Activated naive CD4-positive, alpha-beta T cell treated with anti-CD3 and anti-CD28 coated beads for 36 hours (primary cell): ENCODE measurements at regions of chr16 and their contacts with region 1.

Region 1: DNA sequence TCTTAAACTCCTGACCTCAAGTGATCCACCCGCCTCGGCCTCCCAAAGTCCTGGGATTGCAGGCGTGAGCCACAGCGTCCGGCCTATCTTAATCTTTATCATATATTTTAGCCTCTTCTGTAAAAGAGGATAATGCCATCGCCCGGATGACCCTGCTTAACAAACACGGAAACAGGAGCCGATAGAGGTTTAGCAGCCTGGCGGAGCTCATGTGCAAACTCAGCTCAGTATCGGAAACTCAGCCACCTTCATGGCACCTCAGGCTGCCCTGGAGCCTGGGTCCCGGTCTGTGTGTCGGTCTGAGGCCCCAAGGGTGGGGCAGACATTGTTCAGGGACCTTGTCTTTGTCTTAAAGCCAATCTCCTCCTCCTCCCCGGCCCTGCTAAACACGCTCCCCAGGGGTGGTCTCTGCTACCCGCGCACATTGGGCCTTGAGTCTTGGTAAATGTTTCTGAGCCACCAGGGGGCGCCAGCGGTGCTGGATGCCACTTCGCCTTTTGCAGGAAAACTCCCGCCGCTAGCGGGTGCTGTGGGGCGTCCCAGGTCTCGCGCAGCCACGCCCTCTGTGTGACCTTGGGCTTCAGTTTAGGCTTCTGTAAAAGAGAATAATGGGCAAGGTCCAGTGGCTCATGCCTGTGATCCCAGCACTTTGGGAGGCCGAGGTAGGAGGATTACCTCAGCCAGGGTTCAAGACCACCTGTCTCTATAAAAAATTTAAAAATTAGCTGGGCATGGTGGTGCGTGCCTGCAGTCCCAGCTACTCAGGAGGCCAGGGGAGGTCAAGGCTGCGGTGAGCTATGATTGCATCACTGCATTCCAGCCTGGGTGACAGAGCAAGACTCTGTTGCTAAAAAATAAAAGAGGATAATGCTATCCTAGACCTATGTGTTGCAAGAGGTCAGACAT is 2.7 kb downstream of the CETP start:
- DNase-seq: peak; percentile 98
- H3K4me3 Mint-ChIP-seq: no peak overlapping the region
- H3K27ac Mint-ChIP-seq: no peak overlapping the region
- H3K4me1 Mint-ChIP-seq: peaks cover 19% of the 10 kb centered on the region
- H3K27me3 Mint-ChIP-seq: no peaks in the 10 kb centered on the region

Region 2: DNA sequence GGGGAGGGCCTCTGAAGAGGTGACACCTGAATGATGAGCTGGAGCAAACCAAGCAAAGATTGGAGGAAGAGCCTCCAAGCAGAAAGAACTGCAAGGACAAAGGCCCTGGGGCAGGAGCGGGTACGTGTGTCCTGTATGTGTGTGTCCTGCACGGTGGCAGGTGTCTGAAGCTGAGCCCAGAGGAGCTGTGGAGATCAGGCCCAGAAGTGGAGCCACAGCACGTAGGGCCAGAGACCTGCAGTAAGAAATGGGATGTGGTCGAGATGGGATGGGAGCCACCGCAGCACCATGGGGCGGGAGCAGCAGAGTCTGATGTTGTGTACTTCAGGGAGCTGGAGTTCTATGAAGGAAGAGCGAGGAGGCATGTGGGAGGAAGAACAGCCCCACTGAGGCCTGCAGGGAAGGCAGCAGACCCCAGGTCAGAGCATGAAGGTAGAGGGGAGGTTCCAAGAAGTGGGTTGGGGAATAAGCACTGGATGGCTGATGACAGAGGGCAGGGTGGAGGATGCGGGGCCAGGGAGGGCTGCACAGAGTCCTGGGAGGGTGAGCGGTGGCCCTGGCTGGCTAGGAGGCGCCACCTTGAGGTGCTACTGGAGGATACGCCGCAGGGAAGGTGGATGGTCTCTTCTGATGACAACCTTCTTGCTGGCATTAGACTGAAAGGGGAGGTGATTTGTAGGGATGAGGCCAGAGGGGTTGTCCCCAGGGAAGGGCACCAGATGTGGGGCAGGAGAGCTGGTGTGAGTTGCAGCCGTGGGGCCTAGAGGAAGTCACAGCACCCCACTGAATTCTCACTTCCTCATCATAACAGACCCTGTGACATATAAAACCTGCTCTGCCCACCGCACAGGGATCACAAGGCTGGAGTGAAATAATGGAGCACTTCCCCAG is 13.4 kb before region 1 on chr16:
- CTCF ChIA-PET with region 1: interaction called, 63 read pairs
- intact Hi-C with region 1: no loop called
- DNase-seq: peak; percentile 76
- H3K4me3 Mint-ChIP-seq: no peak overlapping the region
- H3K27ac Mint-ChIP-seq: no peak overlapping the region
- H3K4me1 Mint-ChIP-seq: peaks cover 20% of the 10 kb centered on the region
- H3K27me3 Mint-ChIP-seq: no peaks in the 10 kb centered on the region

Region 3: GRCh38 chr16:57007530-57007929 is 43.0 kb after region 1 on chr16:
- CTCF ChIA-PET with region 1: interaction called, 16 read pairs
- intact Hi-C with region 1: no loop called
- DNase-seq: no peak
- H3K4me3 Mint-ChIP-seq: no peak overlapping the region
- H3K27ac Mint-ChIP-seq: peak overlapping the region; percentile 83
- H3K4me1 Mint-ChIP-seq: peaks cover 87% of the 10 kb centered on the region
- H3K27me3 Mint-ChIP-seq: no peaks in the 10 kb centered on the region

Region 4: DNA sequence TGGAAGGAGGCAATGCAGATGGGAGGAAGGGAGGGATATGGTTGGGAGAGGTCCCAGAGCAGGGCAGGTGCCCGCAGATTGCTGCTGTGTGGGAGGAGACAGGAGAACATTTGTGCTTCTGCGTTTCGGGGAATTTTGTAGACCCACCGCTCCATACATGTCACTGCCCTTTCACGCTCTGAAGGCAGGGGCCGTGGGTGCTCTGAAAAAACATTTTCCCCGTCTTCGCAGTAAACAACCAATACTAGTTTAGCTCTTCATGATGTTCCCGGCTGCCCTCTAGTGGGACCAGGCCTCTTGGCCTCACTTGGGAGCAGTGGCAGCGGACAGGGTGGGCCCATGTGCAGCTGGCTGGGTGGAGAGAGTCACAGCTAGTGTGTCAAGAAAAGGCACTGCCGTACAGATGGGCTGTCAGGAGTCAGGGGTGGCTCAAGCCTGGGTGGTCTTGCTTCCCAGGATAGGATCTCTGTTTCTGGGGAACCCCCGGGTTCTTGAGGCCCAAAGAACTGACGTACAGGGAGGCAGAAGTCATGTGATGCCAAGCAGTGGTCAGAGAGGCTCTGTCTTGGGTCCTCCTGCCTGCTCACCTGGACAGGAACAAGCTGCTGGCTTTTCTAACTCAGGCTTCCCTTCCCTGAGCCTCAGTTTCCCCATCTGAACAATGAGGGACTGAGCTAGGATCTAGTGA is 81.3 kb after region 1 on chr16:
- CTCF ChIA-PET with region 1: interaction called, 39 read pairs
- intact Hi-C with region 1: loop called (anchors 1 kb)
- DNase-seq: peak; percentile 51
- H3K4me3 Mint-ChIP-seq: no peak overlapping the region
- H3K27ac Mint-ChIP-seq: peak overlapping the region; percentile 73
- H3K4me1 Mint-ChIP-seq: peaks cover 65% of the 10 kb centered on the region
- H3K27me3 Mint-ChIP-seq: no peaks in the 10 kb centered on the region

Region 5: GRCh38 chr16:57084257-57084770 is 119.8 kb after region 1 on chr16:
- CTCF ChIA-PET with region 1: interaction called, 20 read pairs
- intact Hi-C with region 1: no loop called
- DNase-seq: peak; percentile 86
- H3K4me3 Mint-ChIP-seq: no peak overlapping the region
- H3K27ac Mint-ChIP-seq: peak overlapping the region; percentile 73
- H3K4me1 Mint-ChIP-seq: peaks cover 9% of the 10 kb centered on the region
- H3K27me3 Mint-ChIP-seq: no peaks in the 10 kb centered on the region